ENCODE measurements at regions of chr1 and their contacts with region 1.

Region 1: GRCh38 chr1:67570473-67571143 is 114.4 kb upstream of the GADD45A start:
- DNase-seq: no peak
- H3K4me3 ChIP-seq: no peak overlapping the region
- H3K27ac ChIP-seq: peak overlapping the region in 1 of 4 donors; percentile 64
- H3K4me1 ChIP-seq: peaks cover 0 to 30% (median 25%) of the 10 kb centered on the region in 4 donors
- H3K27me3 ChIP-seq: no peaks in the 10 kb centered on the region
- CTCF ChIP-seq: no peak
- EP300 ChIP-seq: no peak
- POLR2A ChIP-seq: no peak

Region 2: DNA sequence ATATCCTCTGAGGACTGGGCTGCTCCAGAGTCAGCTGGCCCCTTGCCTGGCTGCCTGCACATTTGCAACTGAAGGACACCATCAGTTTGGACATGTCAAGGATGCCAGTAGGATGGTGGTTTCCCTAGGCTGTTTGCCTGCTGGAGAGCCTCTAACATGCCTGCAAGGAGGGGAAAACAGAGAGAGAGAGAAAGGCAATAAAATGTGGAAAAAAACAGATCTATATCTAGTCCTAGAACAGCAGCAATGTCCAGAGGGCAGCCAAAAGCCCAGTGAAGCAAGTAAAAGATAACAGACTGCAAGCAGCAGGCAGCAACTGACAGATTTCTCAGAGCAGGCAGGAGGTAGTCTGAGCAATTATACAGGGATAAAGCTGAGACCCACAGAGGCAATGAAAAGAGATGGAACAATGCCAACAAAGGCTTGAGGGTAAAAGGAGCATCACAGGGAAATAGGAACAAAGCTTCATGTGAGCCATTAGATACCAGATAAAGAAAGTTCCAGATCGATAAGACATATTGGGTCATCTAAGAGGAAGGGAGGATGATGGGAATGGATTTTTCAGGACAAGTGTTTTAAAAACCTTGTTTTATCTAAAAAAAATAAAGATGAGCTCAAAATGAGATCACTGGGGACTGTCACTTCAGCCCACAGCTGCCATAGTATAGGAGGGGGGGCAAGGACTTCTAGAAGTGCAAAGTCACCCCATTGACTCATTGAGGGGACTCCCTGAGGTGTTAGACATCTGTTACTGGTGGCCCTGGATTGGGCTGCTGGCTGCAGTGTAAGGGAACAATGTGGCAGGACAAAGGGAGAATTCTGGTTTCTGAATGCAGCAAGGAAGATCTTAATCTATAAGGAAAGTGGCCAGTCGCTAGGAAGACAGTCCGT is 75.8 kb after region 1 on chr1:
- in situ Hi-C with region 1: no loop called
- intact Hi-C with region 1: loop called (anchors 10 kb)
- DNase-seq: no peak
- H3K4me3 ChIP-seq: no peak overlapping the region
- H3K27ac ChIP-seq: peak overlapping the region; percentile 38 to 61 (median 58)
- H3K4me1 ChIP-seq: peaks cover 12 to 36% (median 20%) of the 10 kb centered on the region in 4 donors
- H3K27me3 ChIP-seq: no peaks in the 10 kb centered on the region
- CTCF ChIP-seq: no peak
- EP300 ChIP-seq: no peak
- POLR2A ChIP-seq: no peak

Measured in transverse colon (tissue), 4 donors.